Tibial artery (tissue), 4 donors: ENCODE measurements at regions of chr5 and their contacts with region 1.

Region 1: GRCh38 chr5:159444441-159445082 is 114.3 kb upstream of the IL12B start:
- DNase-seq: no peak
- H3K4me3 ChIP-seq: no peak overlapping the region
- H3K27ac ChIP-seq: no peak overlapping the region
- H3K4me1 ChIP-seq: no peaks in the 10 kb centered on the region
- H3K27me3 ChIP-seq: no peaks in the 10 kb centered on the region
- CTCF ChIP-seq: peak; percentile 62 to 67

Region 2: DNA sequence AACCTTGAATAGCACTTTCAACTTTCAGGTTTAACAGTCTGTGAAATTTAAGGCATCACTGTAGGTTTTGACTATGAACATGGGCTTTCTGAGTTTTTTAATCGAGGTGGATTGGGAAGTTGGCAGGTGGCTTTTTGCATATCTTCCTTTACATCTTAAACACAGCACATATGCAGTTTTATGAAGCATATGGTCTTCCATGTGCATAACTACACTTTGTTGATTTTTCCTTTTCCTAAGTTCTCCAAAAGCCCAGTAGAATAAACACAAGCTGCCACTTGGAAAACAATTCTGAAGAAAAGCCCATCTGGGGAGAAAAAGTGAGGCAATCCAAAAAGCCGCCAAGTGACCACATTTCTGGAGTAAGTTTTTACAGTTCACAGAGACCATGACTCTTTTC is 122.3 kb after region 1 on chr5:
- intact Hi-C with region 1: no loop called
- DNase-seq: no peak
- H3K4me3 ChIP-seq: no peak overlapping the region
- H3K27ac ChIP-seq: no peak overlapping the region
- H3K4me1 ChIP-seq: no peaks in the 10 kb centered on the region
- H3K27me3 ChIP-seq: no peaks in the 10 kb centered on the region
- CTCF ChIP-seq: no peak

Region 3: DNA sequence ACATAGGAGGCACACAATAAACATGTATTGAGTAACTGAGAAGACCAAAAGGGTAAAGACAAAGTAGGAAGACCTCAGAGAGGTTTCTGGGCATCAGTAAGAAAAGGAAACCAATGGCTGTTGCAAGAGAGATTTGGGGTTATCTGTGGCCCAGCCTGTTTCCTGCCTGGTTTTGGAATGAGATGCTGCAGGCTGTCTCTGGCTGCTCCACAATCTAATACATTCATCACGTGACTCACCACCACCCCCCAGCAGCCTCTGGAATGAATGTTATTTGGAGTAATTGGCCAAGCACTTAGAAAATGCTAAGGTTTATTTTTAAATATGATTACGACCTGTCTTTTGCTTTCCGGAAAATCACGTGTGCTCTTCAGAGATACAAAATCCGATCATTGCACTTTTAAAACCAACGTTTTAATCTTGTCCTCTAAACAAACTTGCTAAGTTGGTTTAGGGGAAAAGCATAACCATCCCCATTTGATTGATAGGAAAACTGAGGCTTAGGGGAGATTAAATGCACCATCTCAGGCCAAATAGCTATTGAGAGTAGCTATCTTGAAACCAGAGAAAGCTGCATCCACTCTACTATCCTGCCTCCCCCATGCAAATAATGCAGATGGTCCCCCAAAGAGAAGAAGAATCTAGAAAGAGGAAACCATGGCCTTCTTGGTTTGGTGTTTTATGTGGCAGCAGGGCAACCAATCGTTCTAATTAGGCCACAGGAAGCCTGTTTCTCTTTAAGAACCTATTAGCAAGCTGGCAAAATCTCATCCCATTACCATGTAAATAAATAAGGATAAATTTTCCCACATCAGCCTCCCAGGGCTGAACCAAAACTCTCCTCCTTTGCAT is 319.9 kb after region 1 on chr5:
- intact Hi-C with region 1: loop called (anchors 10 kb)
- DNase-seq: no peak
- H3K4me3 ChIP-seq: no peak overlapping the region
- H3K27ac ChIP-seq: peak overlapping the region; percentile 52 to 54
- H3K4me1 ChIP-seq: peaks cover 0 to 36% (median 14%) of the 10 kb centered on the region in 4 donors
- H3K27me3 ChIP-seq: no peaks in the 10 kb centered on the region
- CTCF ChIP-seq: no peak

Region 4: DNA sequence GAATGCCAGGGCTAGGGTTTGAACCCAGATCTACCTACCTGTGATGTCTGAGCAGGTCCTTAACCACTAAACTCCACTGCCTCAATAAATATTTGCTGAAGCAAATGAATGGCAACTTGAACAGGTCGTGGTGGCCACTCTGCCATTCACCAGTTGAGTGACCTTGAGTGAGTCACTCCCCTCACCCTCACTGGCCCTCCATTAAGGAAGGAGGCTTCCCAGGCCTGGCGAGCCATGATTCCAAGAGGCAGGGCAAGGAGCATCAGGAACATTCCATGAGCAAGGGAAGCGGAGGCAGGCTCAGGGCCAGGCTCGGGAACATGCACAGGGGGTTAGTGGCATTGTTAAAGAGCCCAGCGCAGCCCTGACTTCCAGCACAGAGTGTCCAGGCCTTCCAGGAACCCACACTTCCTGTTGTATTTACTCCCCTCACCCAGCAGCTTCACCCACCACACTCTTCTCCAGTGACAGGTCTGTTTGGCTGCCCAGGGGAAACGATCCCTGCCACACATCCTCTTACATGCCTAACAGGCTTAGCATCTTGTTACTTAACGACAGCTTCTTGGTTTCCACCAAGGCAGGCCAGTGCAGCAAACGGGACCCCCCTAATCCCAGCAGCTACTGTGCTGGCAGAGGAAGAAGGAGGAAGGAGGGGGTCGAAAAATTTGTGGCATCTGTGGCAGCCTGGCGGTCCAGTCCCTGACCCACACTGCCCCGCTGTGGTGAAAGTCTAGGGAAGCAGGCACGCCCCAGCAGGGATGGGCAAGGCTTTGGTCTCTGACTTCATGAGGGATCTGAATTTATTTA is 520.7 kb after region 1 on chr5:
- intact Hi-C with region 1: loop called (anchors 5 kb)
- DNase-seq: peak in 1 of 2 donors; percentile 38
- H3K4me3 ChIP-seq: no peak overlapping the region
- H3K27ac ChIP-seq: no peak overlapping the region
- H3K4me1 ChIP-seq: peaks cover 0 to 30% (median 9%) of the 10 kb centered on the region in 4 donors
- H3K27me3 ChIP-seq: no peaks in the 10 kb centered on the region
- CTCF ChIP-seq: peak; percentile 59 to 71

Region 5: DNA sequence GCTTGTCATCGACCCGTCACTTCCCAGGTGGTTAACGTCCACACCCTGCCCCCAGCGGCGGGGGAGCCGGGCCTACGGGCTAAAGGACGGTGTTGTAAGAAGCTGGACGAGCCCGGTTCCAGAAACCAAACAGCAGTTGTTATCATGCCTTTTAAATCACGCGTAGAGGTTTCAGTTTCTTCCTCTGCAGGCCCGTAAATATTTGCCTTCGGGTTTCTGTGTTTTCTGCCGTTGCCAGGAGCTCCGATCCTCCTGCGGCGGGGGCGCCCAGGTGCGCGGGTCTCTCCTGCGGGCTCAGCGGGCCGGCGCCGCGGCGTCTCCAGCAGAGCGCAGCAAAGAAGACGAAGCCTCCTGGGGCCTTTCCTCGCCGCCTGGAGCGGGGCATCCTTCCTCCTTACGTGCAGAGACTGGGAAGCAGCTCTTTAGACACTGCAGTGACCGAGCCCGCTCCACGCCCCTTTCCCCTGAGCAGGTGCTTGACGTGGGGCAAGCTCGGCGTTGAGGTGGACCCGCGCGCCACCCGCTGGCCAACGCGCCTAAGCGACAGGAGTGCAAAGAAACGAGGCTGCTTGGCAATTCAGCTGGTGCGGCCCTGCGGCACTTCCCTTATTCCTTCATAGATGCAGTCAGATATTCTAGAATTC is 542.6 kb after region 1 on chr5:
- intact Hi-C with region 1: loop called (anchors 5 kb)
- DNase-seq: peak; percentile 51 to 85
- H3K4me3 ChIP-seq: peak overlapping the region; percentile 48 to 60
- H3K27ac ChIP-seq: no peak overlapping the region
- H3K4me1 ChIP-seq: peaks cover 0 to 9% (median 6%) of the 10 kb centered on the region in 4 donors
- H3K27me3 ChIP-seq: peaks cover 0 to 7% of the 10 kb centered on the region in 2 donors
- CTCF ChIP-seq: peak; percentile 74